ENCODE measurements at regions of chr1 and their contacts with region 1.

Region 1: GRCh38 chr1:163315773-163316374 is 5.9 kb upstream of the NUF2 start:
- DNase-seq: no peak

Region 2: GRCh38 chr1:162854245-162854882 is 461.5 kb before region 1 on chr1:
- intact Hi-C with region 1: loop called (anchors 5 to 10 kb)
- DNase-seq: no peak

Region 3: GRCh38 chr1:162878000-162878596 is 437.8 kb before region 1 on chr1:
- intact Hi-C with region 1: loop called in 1 of 2 experiments (anchors 5 kb)
- DNase-seq: peak; percentile 87

Region 4: GRCh38 chr1:163071405-163072255 is 244.2 kb before region 1 on chr1:
- intact Hi-C with region 1: loop called (anchors 5 to 10 kb)
- DNase-seq: peak; percentile 82

Region 5: GRCh38 chr1:163174524-163175437 is 141.1 kb before region 1 on chr1:
- intact Hi-C with region 1: loop called in 1 of 2 experiments (anchors 10 kb)
- DNase-seq: peak; percentile 91

Region 6: GRCh38 chr1:164748253-164748899 is 1432.5 kb after region 1 on chr1:
- intact Hi-C with region 1: loop called in 1 of 2 experiments (anchors 5 kb)
- DNase-seq: no peak

Measured in posterior vena cava (tissue), 2 donors.